Upper lobe of right lung (tissue), 1 donor: ENCODE measurements at regions of chr14 and their contacts with region 1.

Region 1: GRCh38 chr14:73731111-73731510 is 16.9 kb upstream of the PNMA1 start:
- DNase-seq: peak; percentile 17
- ATAC-seq: peak; percentile 26
- H3K4me3 ChIP-seq: no peak overlapping the region
- H3K27ac ChIP-seq: no peak overlapping the region
- H3K4me1 ChIP-seq: peaks cover 12% of the 10 kb centered on the region
- H3K27me3 ChIP-seq: no peaks in the 10 kb centered on the region
- CTCF ChIP-seq: no peak

Region 2: DNA sequence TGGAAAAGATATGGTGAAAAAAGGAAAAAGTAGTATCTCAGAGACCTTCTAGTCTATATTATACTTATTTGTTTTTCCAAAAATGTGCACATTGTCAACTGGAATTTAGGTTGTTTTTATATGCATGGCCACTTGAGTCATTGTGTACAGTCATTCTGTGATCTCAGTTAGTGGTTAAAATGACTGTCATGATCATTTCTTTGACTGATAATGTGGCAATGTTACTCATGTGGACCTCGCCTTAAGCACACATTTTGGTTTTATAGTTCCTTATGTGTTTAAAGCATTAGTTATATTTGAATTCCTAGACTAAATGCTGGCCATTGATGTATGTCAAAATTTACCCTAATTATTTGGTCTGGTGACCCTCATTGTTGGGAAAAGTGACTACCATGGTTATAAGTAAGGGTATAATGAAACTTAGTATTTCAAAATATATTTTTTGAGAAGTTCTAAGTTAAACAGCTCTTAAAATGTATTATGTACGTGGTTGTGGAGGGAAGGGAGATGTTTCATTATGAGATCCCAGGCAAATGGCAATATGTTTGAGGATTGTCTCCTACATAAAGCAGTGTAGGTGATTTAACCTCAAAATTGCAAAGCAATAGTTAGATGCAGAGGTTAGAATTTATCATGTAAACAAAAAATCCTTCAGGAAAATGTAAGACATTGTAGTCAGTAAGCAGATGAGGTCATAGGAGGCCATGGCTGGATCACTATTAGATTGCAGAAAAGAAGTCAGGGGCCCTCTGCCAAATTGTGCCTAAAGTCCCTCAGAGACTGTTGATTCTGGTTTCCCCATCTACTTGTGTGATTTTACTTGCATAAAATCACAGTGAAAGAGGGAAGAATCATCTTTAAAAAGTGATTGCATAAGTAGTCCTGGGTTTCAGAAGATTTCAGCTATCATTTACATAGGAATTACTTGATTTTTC is 34.4 kb before region 1 on chr14:
- intact Hi-C with region 1: no loop called
- DNase-seq: no peak
- ATAC-seq: no peak
- H3K4me3 ChIP-seq: no peak overlapping the region
- H3K27ac ChIP-seq: no peak overlapping the region
- H3K4me1 ChIP-seq: no peaks in the 10 kb centered on the region
- H3K27me3 ChIP-seq: no peaks in the 10 kb centered on the region
- CTCF ChIP-seq: no peak

Region 3: DNA sequence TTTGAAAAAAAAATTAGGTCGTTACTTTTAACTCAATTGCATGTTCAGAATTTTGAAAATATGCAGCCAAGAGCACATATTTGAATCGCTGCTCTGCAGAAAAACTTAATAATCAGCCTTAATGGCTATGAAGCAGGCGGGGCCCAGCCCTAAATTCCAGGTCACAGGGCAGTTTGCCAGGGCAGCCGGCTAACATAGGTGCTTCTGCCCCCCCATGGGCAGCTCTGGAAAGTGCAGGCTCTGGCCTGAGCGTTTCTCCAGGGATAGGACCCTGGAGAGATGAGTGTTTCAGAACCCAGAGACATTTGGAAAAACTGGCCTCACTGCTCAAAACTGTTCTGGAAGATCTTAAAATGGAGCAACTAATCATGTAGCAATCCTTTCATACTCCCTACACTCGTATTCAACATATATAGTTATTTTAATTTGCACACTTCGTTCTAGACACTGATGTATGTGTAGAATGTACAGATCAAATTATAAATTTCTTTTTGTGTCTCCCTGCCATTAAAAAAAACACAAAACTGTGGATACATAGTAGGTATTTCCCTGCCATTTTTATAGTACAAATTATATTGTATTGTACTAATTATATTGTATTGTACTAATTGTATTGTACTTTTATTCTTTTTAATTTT is 94.6 kb after region 1 on chr14:
- intact Hi-C with region 1: loop called (anchors 10 kb)
- DNase-seq: peak; percentile 93
- ATAC-seq: peak; percentile 99
- H3K4me3 ChIP-seq: no peak overlapping the region
- H3K27ac ChIP-seq: no peak overlapping the region
- H3K4me1 ChIP-seq: no peaks in the 10 kb centered on the region
- H3K27me3 ChIP-seq: no peaks in the 10 kb centered on the region
- CTCF ChIP-seq: peak; percentile 95

Region 4: DNA sequence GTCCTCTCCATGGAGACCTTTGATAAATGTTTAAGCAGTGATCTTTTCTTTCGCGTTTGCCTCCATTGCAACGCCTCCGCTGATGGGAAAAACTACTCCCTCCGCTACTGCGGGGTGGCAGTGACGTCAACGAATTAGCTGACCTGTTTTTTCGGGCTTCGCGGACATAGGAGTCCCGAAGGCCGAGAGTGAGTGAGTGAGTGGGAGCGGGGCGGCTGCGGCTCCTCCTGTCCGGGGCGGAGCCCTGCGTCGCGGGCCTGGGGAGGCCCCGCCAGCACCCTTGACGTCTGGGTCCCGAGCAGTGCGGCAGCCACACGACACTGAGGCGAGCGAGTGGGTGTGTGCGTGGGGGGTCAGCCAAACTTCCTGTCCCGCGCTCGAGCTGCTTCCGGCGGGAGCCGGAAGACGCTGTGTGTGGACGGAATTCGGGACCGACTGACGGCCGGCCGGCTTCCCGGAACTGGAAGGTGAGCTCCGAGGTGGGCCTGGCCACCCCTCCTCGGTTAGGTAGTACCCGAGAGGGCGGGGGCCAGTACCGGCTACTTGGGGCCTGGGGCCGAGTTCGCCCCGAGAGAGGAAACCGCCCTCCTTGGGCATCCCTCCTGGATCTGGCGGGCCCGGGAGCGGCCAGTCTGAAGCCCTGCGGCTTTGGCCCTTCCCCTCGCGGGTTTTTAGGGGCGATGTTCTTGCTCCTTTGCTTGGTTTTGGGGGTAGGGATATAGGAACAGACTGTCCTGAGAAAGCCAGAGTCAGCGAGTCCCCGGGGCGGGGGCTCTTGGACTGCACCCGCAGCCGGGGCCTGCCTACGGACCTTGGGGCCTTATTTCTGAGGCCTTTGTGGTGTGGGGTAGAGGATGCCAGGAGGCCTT is 155.6 kb after region 1 on chr14 and contains the start of gene ZNF410:
- intact Hi-C with region 1: no loop called
- DNase-seq: peak; percentile 98
- ATAC-seq: peak; percentile 100
- H3K4me3 ChIP-seq: peak within 1 kb of the TSS; percentile 95
- H3K27ac ChIP-seq: peak within 1 kb of the TSS; percentile 94
- H3K4me1 ChIP-seq: peaks cover 26% of the 10 kb centered on the region
- H3K27me3 ChIP-seq: no peaks in the 10 kb centered on the region
- CTCF ChIP-seq: no peak
- total RNA-seq, gene ZNF410: 50.6 TPM